ENCODE measurements at regions of chr20 and their contacts with region 1.

Region 1: DNA sequence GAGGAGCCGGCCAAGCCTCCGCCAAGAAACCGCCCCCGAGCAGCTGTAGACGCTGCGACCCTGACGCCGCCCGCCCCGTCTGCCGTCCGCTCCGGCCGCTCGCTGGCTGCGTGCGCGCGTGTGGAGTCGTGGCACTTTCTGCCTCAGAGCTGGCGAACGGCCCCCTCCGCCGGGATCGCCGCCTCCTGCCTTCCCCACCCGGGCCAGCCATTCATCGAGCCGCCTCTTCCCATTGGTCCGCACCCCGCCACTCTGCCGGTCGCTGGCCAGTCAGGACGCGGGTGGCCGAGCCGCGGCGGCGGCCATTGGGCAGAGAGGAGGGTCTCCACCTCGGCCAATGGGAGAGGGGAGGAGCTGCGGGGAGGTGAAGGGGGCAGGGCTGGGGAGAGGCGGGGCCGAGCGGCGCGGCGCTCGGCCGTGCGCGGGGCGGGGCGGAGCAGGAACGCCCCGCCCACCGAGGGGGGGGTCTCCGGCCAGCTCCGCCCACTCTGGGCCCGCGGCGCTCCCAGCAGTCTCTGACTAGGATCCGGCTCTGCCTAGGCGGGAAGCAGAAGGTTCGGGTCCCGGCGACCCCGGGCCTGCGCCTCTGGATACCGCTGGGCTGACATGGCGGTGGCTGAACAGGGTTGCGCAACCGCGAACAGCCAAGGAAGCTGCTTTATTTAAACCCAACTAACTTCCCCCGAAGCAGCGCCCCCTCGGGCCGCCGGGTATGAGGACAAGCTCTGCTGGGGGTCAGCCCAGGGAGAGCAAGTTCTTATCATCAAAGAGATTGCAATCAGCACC is at the start of gene RRBP1:
- DNase-seq: peak; percentile 97
- ATAC-seq: peak; percentile 83 to 95 (median 89)
- H3K4me3 ChIP-seq: peak within 1 kb of the TSS; percentile 77
- H3K4me3 Mint-ChIP-seq: peak within 1 kb of the TSS; percentile 94
- H3K27ac ChIP-seq: peak within 1 kb of the TSS; percentile 89
- H3K27ac Mint-ChIP-seq: peak within 1 kb of the TSS; percentile 80 to 94
- H3K4me1 ChIP-seq: peaks cover 19% of the 10 kb centered on the region
- H3K4me1 Mint-ChIP-seq: peaks cover 28 to 29% of the 10 kb centered on the region in 2 donors
- H3K27me3 ChIP-seq: peaks cover 2% of the 10 kb centered on the region
- H3K27me3 Mint-ChIP-seq: peaks cover 26 to 34% of the 10 kb centered on the region in 2 donors
- CTCF ChIP-seq: peak; percentile 89
- total RNA-seq, gene RRBP1: 88.3 to 95.4 (median 90.1) TPM

Region 2: GRCh38 chr20:17536944-17537444 is 145.3 kb before region 1 on chr20:
- intact Hi-C with region 1: loop called (anchors 5 kb)
- DNase-seq: peak; percentile 52 to 85
- ATAC-seq: peak; percentile 95 to 100 (median 100)
- H3K4me3 ChIP-seq: no peak overlapping the region
- H3K4me3 Mint-ChIP-seq: no peak overlapping the region
- H3K27ac ChIP-seq: no peak overlapping the region
- H3K27ac Mint-ChIP-seq: peak overlapping the region in 1 of 2 donors; percentile 53
- H3K4me1 ChIP-seq: peaks cover 14% of the 10 kb centered on the region
- H3K4me1 Mint-ChIP-seq: peaks cover 16 to 21% of the 10 kb centered on the region in 2 donors
- H3K27me3 ChIP-seq: peaks cover under 1% of the 10 kb centered on the region
- H3K27me3 Mint-ChIP-seq: peaks cover 12 to 29% of the 10 kb centered on the region in 2 donors
- CTCF ChIP-seq: peak; percentile 87

Region 3: GRCh38 chr20:17594443-17594842 is 87.9 kb before region 1 on chr20:
- intact Hi-C with region 1: no loop called
- DNase-seq: no peak
- ATAC-seq: no peak
- H3K4me3 ChIP-seq: no peak overlapping the region
- H3K4me3 Mint-ChIP-seq: no peak overlapping the region
- H3K27ac ChIP-seq: no peak overlapping the region
- H3K27ac Mint-ChIP-seq: no peak overlapping the region
- H3K4me1 ChIP-seq: no peaks in the 10 kb centered on the region
- H3K4me1 Mint-ChIP-seq: peaks cover 51 to 61% of the 10 kb centered on the region in 2 donors
- H3K27me3 ChIP-seq: no peaks in the 10 kb centered on the region
- H3K27me3 Mint-ChIP-seq: no peaks in the 10 kb centered on the region
- CTCF ChIP-seq: no peak

Region 4: GRCh38 chr20:17664025-17664633 is 18.2 kb before region 1 on chr20:
- intact Hi-C with region 1: loop called (anchors 2 kb)
- DNase-seq: no peak
- ATAC-seq: peak; percentile 48 to 66 (median 54)
- H3K4me3 ChIP-seq: no peak overlapping the region
- H3K4me3 Mint-ChIP-seq: peak overlapping the region; percentile 61
- H3K27ac ChIP-seq: peak overlapping the region; percentile 31
- H3K27ac Mint-ChIP-seq: peak overlapping the region; percentile 66 to 74
- H3K4me1 ChIP-seq: peaks cover 44% of the 10 kb centered on the region
- H3K4me1 Mint-ChIP-seq: peaks cover 70 to 84% of the 10 kb centered on the region in 2 donors
- H3K27me3 ChIP-seq: no peaks in the 10 kb centered on the region
- H3K27me3 Mint-ChIP-seq: no peaks in the 10 kb centered on the region
- CTCF ChIP-seq: no peak

Region 5: GRCh38 chr20:17856024-17856564 is 173.8 kb after region 1 on chr20:
- intact Hi-C with region 1: loop called (anchors 5 kb)
- DNase-seq: no peak
- ATAC-seq: peak in 2 of 3 donors; percentile 24 to 42
- H3K4me3 ChIP-seq: no peak overlapping the region
- H3K4me3 Mint-ChIP-seq: no peak overlapping the region
- H3K27ac ChIP-seq: peak overlapping the region; percentile 34
- H3K27ac Mint-ChIP-seq: no peak overlapping the region
- H3K4me1 ChIP-seq: peaks cover 55% of the 10 kb centered on the region
- H3K4me1 Mint-ChIP-seq: peaks cover 43 to 52% of the 10 kb centered on the region in 2 donors
- H3K27me3 ChIP-seq: no peaks in the 10 kb centered on the region
- H3K27me3 Mint-ChIP-seq: peaks cover 0 to 8% of the 10 kb centered on the region in 2 donors
- CTCF ChIP-seq: no peak

Region 6: DNA sequence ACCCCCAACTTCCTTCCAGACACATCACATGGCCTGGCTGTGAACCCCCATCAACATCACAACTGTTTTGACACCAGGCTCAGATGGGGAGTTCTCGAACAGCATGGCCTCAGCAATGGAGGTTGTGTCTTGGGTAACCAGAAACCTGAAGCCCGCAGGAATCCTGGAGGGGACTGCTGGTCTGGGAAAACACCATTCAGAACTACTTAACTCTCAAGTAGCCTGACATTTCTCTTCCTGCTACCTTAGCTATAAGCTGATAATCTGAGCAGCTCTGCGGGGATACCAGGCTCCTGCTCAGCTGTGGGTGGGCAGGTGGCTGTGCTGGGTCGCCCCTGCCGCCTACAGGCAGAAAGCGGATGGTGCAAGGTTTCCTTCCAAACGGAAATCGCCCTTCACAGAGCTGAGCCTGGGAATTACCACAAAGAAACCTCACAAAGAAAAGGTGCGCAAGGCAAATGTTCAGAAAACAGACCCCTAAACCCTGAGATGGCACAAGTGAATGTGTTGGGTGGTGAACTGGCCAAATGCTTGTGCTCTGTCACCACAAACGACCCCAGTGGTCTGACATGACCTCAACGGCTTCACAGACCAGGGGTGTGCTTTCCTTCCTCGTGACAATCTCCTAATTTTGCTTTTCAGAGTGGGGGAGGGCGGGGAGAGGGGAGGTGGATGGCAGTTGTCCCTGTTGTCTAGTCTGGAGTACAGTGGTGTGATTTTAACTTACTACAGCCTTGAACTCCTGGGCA is 256.7 kb after region 1 on chr20:
- intact Hi-C with region 1: loop called (anchors 2 kb)
- DNase-seq: peak; percentile 55 to 79
- ATAC-seq: peak; percentile 88 to 95 (median 94)
- H3K4me3 ChIP-seq: no peak overlapping the region
- H3K4me3 Mint-ChIP-seq: peak overlapping the region; percentile 50
- H3K27ac ChIP-seq: peak overlapping the region; percentile 6
- H3K27ac Mint-ChIP-seq: peak overlapping the region in 1 of 2 donors; percentile 76
- H3K4me1 ChIP-seq: peaks cover 17% of the 10 kb centered on the region
- H3K4me1 Mint-ChIP-seq: peaks cover 5 to 11% of the 10 kb centered on the region in 2 donors
- H3K27me3 ChIP-seq: no peaks in the 10 kb centered on the region
- H3K27me3 Mint-ChIP-seq: no peaks in the 10 kb centered on the region
- CTCF ChIP-seq: peak; percentile 76

Region 7: DNA sequence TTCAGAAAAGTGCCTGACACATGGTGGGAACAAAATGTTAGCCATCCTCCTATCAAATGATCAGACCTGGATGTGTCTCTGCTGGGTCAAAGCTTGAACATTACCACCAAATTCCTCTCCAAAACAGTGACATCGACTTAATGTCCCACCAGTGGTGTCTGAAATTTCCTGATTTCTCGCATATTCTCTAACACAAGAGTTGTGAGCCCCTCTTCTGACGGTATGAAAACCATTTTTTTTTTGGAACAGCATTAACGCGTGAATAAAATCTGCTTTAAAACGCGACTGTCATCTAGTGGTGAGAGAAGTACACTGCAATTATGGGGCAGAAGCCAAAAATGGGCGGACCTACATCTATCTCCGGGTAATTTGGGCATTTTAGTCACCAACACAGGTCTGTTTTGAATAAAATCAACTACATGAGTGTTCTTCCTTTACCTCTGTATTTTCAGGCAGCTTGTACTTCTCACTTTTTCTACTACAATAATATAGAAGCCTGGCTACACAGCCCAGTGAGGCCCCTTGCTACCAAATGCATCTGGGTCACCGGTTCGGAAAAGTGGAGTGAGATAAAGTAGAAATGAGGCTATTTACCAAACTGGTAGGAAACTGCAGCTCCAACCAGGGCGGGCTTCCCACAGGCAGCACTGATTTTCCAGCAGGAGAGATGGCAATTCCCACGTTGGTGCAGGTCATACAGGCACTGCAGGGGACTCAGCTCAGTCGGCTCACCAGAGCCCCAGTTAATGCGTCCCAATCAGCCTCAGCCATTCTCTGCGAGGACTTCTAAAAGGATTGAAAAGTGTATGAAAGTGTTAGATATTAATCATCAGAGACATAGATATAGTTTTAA is 313.9 kb after region 1 on chr20:
- intact Hi-C with region 1: loop called (anchors 10 kb)
- DNase-seq: peak in 1 of 2 donors; percentile 80
- ATAC-seq: peak; percentile 87 to 99 (median 95)
- H3K4me3 ChIP-seq: no peak overlapping the region
- H3K4me3 Mint-ChIP-seq: no peak overlapping the region
- H3K27ac ChIP-seq: no peak overlapping the region
- H3K27ac Mint-ChIP-seq: peak overlapping the region in 1 of 2 donors; percentile 37
- H3K4me1 ChIP-seq: peaks cover 3% of the 10 kb centered on the region
- H3K4me1 Mint-ChIP-seq: peaks cover 6 to 7% of the 10 kb centered on the region in 2 donors
- H3K27me3 ChIP-seq: no peaks in the 10 kb centered on the region
- H3K27me3 Mint-ChIP-seq: peaks cover 0 to 10% of the 10 kb centered on the region in 2 donors
- CTCF ChIP-seq: peak; percentile 92